ENCODE measurements at regions of chr3 and their contacts with region 1.

Region 1: GRCh38 chr3:128787256-128788240 is 61.6 kb downstream of the RAB7A start:
- DNase-seq: peak; percentile 65 to 75
- H3K4me3 ChIP-seq: no peak overlapping the region
- H3K27ac ChIP-seq: peak overlapping the region; percentile 18 to 56 (median 34)
- H3K4me1 ChIP-seq: peaks cover 48 to 60% of the 10 kb centered on the region in 2 donors
- H3K27me3 ChIP-seq: no peaks in the 10 kb centered on the region
- CTCF ChIP-seq: peak in 5 of 6 experiments; percentile 34 to 70 (median 64)
- POLR2A ChIP-seq: no peak

Region 2: DNA sequence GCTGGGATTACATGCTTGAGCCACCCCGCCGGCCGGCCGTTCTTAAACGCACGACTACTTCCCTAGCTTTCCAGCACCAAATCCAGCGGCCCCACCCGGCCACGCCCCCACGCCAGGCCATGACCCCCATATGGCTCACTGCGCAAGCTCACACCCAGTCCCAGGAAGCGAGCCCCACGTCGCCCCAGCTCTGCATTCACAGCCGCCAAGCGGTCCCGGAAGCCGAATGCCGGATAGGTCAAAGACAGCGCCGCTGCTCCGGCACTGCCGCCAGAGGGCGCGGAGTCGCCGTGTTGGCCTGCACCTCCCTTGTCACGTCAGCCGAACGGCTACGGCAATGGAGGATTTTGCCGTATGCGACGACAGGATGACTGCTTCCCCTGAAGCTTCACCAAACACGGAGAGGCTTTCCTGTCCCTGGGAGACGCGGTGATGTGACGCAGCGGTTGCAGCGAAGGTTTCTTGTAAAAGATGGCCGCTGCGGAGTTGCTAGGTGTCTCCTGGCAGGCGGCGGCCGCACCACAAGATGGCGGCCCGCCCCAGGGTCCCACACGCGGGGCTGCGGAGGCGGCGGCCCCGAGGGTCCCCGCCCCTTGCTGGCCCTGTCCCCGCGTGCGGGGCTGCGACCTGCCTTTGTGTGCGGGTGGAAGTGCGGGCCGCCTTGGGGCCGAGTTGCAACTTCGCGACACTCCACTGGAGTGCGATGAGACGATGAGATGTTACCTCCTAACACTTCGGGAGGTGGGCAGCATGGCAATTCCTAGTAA is 106.8 kb before region 1 on chr3:
- intact Hi-C with region 1: loop called (anchors 5 kb)
- DNase-seq: peak; percentile 99
- H3K4me3 ChIP-seq: peak overlapping the region; percentile 3 to 75 (median 42)
- H3K27ac ChIP-seq: peak overlapping the region; percentile 92 to 96 (median 94)
- H3K4me1 ChIP-seq: peaks cover 0 to 8% of the 10 kb centered on the region in 2 donors
- H3K27me3 ChIP-seq: no peaks in the 10 kb centered on the region
- CTCF ChIP-seq: peak; percentile 90 to 100 (median 98)
- POLR2A ChIP-seq: peak in 1 of 2 donors; percentile 82

Region 3: GRCh38 chr3:128742821-128743594 is 44.5 kb before region 1 on chr3:
- intact Hi-C with region 1: loop called (anchors 5 kb)
- DNase-seq: no peak
- H3K4me3 ChIP-seq: no peak overlapping the region
- H3K27ac ChIP-seq: no peak overlapping the region
- H3K4me1 ChIP-seq: no peaks in the 10 kb centered on the region
- H3K27me3 ChIP-seq: no peaks in the 10 kb centered on the region
- CTCF ChIP-seq: no peak
- POLR2A ChIP-seq: no peak

Measured in thyroid gland (tissue), 4 donors.